Esophagus squamous epithelium (tissue), 5 donors: ENCODE measurements at regions of chr12 and their contacts with region 1.

Region 1: DNA sequence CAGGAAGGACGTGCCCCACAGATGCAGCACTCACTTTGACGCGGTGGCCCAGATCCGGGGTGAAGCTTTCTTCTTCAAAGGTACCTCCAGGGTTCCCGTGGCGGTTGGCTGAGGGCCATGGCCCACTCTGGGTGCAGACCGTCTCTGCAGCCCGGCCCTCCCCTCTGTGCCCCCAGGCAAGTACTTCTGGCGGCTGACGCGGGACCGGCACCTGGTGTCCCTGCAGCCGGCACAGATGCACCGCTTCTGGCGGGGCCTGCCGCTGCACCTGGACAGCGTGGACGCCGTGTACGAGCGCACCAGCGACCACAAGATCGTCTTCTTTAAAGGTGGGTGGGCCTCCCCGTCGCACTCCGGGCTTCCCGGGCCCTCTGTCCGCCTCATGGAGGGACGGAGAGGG is 16.9 kb downstream of the MMP17 start:
- DNase-seq: no peak
- H3K4me3 ChIP-seq: no peak overlapping the region
- H3K27ac ChIP-seq: no peak overlapping the region
- H3K4me1 ChIP-seq: no peaks in the 10 kb centered on the region
- H3K27me3 ChIP-seq: no peaks in the 10 kb centered on the region
- CTCF ChIP-seq: no peak
- POLR2A ChIP-seq: no peak

Region 2: GRCh38 chr12:132003846-132004245 is 158.7 kb after region 1 on chr12:
- intact Hi-C with region 1: loop called (anchors 10 kb)
- DNase-seq: no peak
- H3K4me3 ChIP-seq: no peak overlapping the region
- H3K27ac ChIP-seq: no peak overlapping the region
- H3K4me1 ChIP-seq: no peaks in the 10 kb centered on the region
- H3K27me3 ChIP-seq: no peaks in the 10 kb centered on the region
- CTCF ChIP-seq: no peak
- POLR2A ChIP-seq: no peak